Mammary epithelial cell (primary cell): ENCODE measurements at regions of chr14 and their contacts with region 1.

Region 1: DNA sequence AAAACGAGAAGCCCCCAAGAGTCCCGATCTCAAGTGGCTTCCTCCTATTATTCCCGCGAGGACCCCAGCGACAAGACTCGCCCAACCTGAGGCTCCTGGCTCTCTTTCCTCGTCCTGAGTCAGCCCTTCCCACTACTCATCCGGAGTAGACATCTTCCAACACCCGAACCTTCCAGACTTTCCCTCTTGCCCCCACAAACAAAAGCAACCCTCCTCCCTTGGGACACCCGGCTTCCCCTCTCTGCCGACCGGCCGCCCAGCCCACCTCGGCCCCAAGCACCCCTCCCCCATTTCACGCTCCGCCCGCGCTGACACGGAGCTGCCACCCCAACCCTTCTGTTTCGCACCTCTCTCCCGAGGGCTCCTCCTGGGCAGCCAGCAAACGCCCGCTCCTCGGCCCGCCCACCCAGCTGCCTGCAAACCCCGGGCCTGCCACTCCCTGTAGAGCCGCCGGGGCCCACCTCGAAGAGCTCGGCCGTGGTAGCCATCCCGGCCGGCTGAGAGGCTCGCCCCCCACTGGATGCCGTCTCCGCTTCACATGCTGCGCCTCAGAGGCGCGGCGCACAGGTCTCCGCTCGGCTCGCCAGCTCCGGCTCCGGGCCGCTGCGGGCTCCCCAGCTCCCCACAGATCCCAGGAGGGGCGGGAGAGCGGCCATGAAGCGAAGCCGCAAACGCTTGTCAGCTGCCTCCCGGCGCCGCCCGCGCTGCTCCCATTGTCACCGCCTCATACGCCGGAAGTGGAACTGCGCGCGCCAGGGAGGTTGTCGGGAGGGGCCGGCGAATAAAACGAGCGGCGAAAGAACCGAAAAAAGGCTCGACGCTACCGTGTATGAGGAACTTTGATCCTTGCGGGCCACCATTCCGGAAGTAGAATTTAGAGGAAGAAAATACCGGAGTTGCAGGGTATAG is at the starts of genes AP5M1 and EXOC5:
- DNase-seq: peak; percentile 93
- H3K4me3 ChIP-seq: peak within 1 kb of the TSS; percentile 52 to 97 (median 81)
- H3K27ac ChIP-seq: peak within 1 kb of the TSS; percentile 62
- H3K4me1 ChIP-seq: peaks cover 14% of the 10 kb centered on the region
- H3K27me3 ChIP-seq: no peaks in the 10 kb centered on the region
- CTCF ChIP-seq: no peak
- total RNA-seq, gene AP5M1: 33.7 to 35.6 TPM
- total RNA-seq, gene EXOC5: 67.0 to 78.8 TPM

Region 2: DNA sequence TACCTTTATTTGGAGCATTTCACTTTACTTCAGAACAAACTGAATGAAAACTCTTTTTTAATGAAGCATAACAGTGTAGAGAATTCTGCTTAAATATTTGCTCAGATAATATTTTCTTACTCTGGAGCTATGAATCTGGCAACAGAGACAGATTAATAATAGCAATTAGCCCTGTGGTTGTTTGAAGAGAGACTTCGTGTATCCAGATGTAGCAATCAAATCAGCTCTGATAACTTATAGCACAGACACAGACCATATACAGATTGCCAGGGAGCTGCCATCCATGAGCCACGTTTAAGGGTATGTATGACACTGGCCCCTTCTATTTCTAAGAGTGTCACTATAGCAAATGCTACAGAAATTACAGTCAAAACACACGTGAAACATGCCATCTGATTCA is 146.3 kb before region 1 on chr14:
- CTCF ChIA-PET with region 1: no interaction called
- dilution Hi-C with region 1: no loop called
- in situ Hi-C with region 1: no loop called
- intact Hi-C with region 1: no loop called
- DNase-seq: no peak
- H3K4me3 ChIP-seq: no peak overlapping the region
- H3K27ac ChIP-seq: no peak overlapping the region
- H3K4me1 ChIP-seq: no peaks in the 10 kb centered on the region
- H3K27me3 ChIP-seq: no peaks in the 10 kb centered on the region
- CTCF ChIP-seq: no peak

Region 3: GRCh38 chr14:57390028-57390805 is 121.8 kb after region 1 on chr14 and contains the start of gene NAA30:
- CTCF ChIA-PET with region 1: no interaction called
- dilution Hi-C with region 1: no loop called
- in situ Hi-C with region 1: no loop called
- intact Hi-C with region 1: loop called (anchors 5 kb)
- DNase-seq: peak; percentile 90
- H3K4me3 ChIP-seq: peak within 1 kb of the TSS; percentile 76 to 89 (median 79)
- H3K27ac ChIP-seq: peak within 1 kb of the TSS; percentile 58
- H3K4me1 ChIP-seq: peaks cover 6% of the 10 kb centered on the region
- H3K27me3 ChIP-seq: no peaks in the 10 kb centered on the region
- CTCF ChIP-seq: no peak
- total RNA-seq, gene NAA30: 22.9 to 28.2 TPM

Region 4: DNA sequence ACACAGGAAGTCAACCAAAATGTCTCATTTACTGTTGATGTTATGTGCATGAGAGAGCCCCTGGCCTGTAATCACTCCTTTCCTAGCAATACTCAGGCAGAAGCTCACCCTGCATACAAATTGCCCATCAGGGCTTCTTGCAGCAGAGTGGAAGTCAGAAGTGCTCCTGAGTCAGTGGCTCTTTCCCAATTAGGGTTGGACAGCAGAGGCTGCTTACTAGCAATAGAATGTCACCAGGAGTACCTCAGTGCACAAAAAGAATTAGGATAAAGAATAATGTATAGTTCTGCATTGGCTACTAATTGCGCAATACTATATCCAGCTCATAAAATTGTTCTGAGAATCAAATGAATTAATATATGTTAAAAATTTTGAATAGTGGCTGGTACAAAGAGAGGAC is 436.3 kb after region 1 on chr14:
- CTCF ChIA-PET with region 1: no interaction called
- dilution Hi-C with region 1: no loop called
- in situ Hi-C with region 1: no loop called
- intact Hi-C with region 1: no loop called
- DNase-seq: no peak
- H3K4me3 ChIP-seq: no peak overlapping the region
- H3K27ac ChIP-seq: no peak overlapping the region
- H3K4me1 ChIP-seq: no peaks in the 10 kb centered on the region
- H3K27me3 ChIP-seq: no peaks in the 10 kb centered on the region
- CTCF ChIP-seq: no peak